Heart left ventricle (tissue), 16 donors: ENCODE measurements at regions of chr9 and their contacts with region 1.

Region 1: GRCh38 chr9:37582548-37583157 is 6.5 kb upstream of the FBXO10 start:
- DNase-seq: no peak
- ATAC-seq: peak in 1 of 4 donors; percentile 46
- H3K4me3 ChIP-seq: no peak overlapping the region
- H3K27ac ChIP-seq: peak overlapping the region in 1 of 12 donors; percentile 71
- H3K4me1 ChIP-seq: peaks cover 0 to 4% (median 0%) of the 10 kb centered on the region in 12 donors
- H3K27me3 ChIP-seq: no peaks in the 10 kb centered on the region
- CTCF ChIP-seq: peak; percentile 59 to 85 (median 68)
- POLR2A ChIP-seq: no peak

Region 2: GRCh38 chr9:37706290-37706689 is 123.6 kb after region 1 on chr9:
- intact Hi-C with region 1: loop called in 1 of 10 experiments (anchors 10 kb)
- DNase-seq: no peak
- ATAC-seq: no peak
- H3K4me3 ChIP-seq: no peak overlapping the region
- H3K27ac ChIP-seq: no peak overlapping the region
- H3K4me1 ChIP-seq: no peaks in the 10 kb centered on the region
- H3K27me3 ChIP-seq: peaks cover 0 to 13% (median 0%) of the 10 kb centered on the region in 9 donors
- CTCF ChIP-seq: no peak
- POLR2A ChIP-seq: no peak

Region 3: GRCh38 chr9:37760416-37761161 is 177.9 kb after region 1 on chr9:
- intact Hi-C with region 1: loop called in 1 of 10 experiments (anchors 10 kb)
- DNase-seq: no peak
- ATAC-seq: no peak
- H3K4me3 ChIP-seq: no peak overlapping the region
- H3K27ac ChIP-seq: no peak overlapping the region
- H3K4me1 ChIP-seq: no peaks in the 10 kb centered on the region
- H3K27me3 ChIP-seq: no peaks in the 10 kb centered on the region
- CTCF ChIP-seq: no peak
- POLR2A ChIP-seq: no peak

Region 4: DNA sequence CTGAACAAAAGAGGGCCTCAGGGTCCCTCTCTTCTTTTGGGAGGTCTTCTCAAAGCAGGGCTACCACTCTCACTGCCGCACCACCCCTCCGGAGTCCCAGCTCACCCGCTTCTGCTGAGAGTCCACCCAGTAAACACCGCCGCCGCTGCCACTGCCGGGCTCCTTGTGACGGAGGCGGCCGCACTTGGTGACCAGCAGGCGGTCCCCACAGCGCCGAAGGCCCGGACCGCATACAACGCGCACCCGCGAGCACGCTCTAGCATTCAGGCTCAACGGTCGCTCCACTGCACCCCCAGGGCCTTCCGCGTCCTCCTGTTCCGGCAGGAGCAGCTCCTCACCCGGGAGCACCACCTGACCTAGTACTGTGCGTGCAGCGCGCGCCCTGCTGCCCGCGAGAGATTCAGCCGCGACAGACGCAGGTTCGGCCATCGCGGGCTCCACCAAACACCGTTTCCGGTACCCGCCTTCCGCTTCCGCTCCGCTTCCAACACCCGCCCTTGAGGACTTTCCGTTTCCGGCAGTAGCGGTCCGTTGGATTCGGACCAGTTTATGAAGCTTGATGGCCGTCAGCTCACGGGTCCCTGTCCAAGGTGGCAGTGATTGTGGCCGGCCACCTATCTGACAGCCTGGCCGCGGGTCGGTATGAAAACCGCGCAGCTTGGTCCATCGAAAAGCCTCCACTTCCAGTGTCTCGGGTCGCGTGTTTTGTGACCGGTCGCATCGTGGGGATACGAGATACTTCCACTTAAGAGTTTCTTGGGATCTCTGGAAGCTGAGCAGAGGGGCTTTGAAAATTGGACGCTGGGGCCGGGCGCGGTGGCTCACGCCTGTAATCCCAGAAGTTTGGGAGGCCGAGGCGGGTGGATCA is 202.2 kb after region 1 on chr9 and contains the start of gene EXOSC3:
- intact Hi-C with region 1: loop called in 4 of 10 experiments (anchors 5 to 10 kb)
- DNase-seq: peak; percentile 88 to 93 (median 92)
- ATAC-seq: peak; percentile 95 to 98 (median 98)
- H3K4me3 ChIP-seq: peak within 1 kb of the TSS; percentile 74 to 98 (median 88)
- H3K27ac ChIP-seq: peak within 1 kb of the TSS; percentile 25 to 90 (median 84)
- H3K4me1 ChIP-seq: peaks cover 3 to 28% (median 18%) of the 10 kb centered on the region in 12 donors
- H3K27me3 ChIP-seq: peaks cover 0 to 9% (median 0%) of the 10 kb centered on the region in 9 donors
- CTCF ChIP-seq: peak in 7 of 12 donors; percentile 9 to 24 (median 16)
- POLR2A ChIP-seq: peak in 1 of 2 donors; percentile 70
- total RNA-seq, gene EXOSC3: 9.6 to 18.6 (median 14.0) TPM

Region 5: DNA sequence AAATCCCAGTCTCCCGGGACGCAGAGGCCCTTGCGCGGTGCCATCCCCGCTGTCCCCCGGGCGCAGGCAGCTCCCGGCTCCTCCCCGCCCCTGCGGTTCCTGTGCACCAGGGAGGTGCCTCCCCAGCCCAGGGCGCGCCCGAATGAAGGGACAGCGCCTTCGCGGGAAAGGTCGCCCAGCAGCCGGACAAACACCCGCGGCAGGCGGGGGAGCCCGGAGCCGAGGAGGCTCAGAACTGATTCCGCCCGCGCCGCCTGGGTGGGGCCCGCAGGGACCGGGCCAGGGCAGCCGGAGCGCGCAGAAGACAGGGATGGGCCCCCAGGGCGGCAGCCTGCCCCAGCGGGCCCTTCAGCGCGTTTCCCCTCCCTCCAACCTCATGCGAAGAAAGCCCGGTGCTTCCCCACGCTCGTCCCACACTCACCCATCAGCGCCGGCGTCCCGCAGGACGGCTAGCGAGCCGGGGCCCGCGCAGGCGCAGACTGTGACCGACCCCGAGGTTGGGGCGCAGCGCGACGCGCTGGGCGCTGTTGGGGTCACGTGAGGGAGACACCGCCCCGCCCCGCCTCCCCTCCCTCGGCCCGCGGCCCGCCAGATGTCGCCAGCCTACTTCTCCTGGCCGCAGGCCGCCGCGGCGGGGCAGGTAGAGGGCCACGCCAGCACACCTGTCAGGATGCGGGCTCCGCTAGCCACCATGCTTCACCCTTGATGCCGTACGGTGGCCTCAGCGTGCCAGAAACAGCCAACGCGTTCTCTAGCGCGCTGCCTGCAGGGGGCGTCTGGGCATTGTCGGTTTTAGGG is 321.2 kb after region 1 on chr9 and contains the start of gene SLC25A51:
- intact Hi-C with region 1: loop called in 1 of 10 experiments (anchors 5 kb)
- DNase-seq: peak; percentile 93 to 97 (median 95)
- ATAC-seq: peak; percentile 83 to 94 (median 94)
- H3K4me3 ChIP-seq: peak within 1 kb of the TSS; percentile 71 to 99 (median 93)
- H3K27ac ChIP-seq: peak within 1 kb of the TSS; percentile 43 to 96 (median 88)
- H3K4me1 ChIP-seq: peaks cover 0 to 29% (median 21%) of the 10 kb centered on the region in 12 donors
- H3K27me3 ChIP-seq: no peaks in the 10 kb centered on the region
- CTCF ChIP-seq: peak; percentile 83 to 97 (median 92)
- POLR2A ChIP-seq: peak in 1 of 2 donors; percentile 71
- total RNA-seq, gene SLC25A51: 18.9 to 27.6 (median 22.9) TPM

Region 6: GRCh38 chr9:38251036-38251860 is 668.6 kb after region 1 on chr9:
- intact Hi-C with region 1: no loop called
- DNase-seq: no peak
- ATAC-seq: no peak
- H3K4me3 ChIP-seq: no peak overlapping the region
- H3K27ac ChIP-seq: no peak overlapping the region
- H3K4me1 ChIP-seq: no peaks in the 10 kb centered on the region
- H3K27me3 ChIP-seq: no peaks in the 10 kb centered on the region
- CTCF ChIP-seq: no peak
- POLR2A ChIP-seq: no peak